ENCODE measurements at regions of chr5 and their contacts with region 1.

Region 1: DNA sequence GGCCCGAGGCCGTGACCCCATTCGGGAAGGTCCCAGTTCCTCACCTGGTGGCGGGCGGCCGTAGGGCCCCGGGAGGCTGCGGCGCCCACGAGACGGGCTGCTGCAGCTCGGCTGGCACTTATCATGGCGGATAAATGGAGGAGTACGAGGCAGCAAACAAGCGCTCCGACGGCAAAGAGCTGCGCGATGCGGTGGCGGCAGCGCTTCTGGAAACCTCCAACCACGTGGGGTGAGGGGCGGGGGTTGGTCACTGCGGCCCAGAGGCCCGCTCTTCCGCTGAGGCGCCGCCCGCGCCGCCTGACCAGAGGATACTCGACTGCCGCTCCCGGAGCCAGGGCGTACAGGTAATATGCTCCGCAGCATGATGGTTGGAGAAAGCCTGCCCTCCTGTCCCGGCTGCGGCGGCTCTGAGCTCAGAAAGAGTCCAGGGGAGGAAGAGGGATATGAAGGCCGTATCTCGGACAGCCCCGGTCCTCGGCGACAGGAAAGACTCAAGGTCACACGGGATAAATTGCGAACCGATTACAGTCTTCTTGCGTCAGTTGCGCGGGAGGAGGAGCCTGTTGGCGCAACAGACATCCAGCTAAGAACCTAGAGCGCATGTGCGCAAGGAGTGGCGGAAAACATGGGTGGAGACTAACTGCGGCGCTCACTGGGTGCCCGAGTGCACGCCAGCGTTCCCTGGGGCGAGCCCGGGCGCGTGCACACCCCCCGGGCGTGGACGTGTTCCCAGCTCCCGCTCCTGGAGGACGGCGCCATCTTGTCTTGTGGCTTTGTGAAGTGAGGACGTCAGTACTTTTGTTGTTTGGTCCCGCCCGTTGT is at the start of gene HSPA9:
- DNase-seq: peak; percentile 98 to 99 (median 98)
- H3K4me3 ChIP-seq: peak within 1 kb of the TSS; percentile 88
- H3K27ac ChIP-seq: peak within 1 kb of the TSS; percentile 97 to 98
- H3K4me1 ChIP-seq: peaks cover 1% of the 10 kb centered on the region
- H3K27me3 ChIP-seq: no peaks in the 10 kb centered on the region
- CTCF ChIP-seq: peak in 2 of 3 donors; percentile 6 to 57
- EP300 ChIP-seq: peak; percentile 26
- POLR2A ChIP-seq: peak; percentile 91
- total RNA-seq, gene HSPA9: 147 to 340 (median 180) TPM

Region 2: DNA sequence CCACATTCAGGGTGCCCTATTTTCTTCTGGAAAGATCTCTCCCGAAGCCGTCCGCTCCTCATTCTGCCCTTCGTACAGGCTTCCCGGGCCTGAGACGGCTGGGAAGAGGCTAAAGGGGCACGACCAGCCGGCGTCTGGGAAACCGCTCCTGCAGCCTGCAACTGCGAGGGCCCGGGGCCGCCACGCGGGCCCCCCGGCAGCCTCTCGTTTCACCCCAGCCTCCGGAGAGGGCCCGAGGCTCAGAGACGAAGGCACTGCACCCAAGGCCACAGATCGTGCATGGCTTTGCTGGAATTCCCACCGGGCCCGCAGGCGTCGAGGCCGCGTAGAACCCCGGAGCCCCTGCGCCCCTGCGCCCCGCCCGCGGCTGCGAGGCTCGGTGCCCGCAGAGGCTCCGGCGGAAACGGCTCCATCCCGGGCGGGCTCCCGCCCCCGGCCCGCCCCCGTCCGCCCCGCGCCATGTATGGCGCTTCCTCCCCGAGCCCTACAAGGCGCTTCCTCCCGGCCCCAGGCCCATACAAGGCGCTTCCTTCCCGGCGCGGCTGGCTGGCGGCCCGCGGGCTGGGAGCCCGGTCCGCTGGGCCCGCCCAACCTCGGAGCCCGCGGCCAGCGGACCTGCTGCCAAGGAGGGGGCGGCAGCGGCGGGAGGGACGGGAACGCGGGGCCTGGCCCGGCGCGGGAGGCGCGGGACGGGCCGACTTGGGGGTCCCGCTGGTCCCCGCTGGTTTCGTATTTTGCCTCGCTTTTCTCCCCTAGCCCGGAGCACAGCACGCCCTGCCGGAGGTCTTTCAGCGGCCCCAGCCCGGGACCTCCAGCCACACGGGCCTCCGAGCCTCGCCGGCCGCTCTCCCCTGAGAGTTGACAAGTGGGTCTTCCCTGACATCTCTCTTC is 83.5 kb before region 1 on chr5:
- intact Hi-C with region 1: no loop called
- DNase-seq: peak; percentile 93 to 96 (median 95)
- H3K4me3 ChIP-seq: peak overlapping the region; percentile 51
- H3K27ac ChIP-seq: peak overlapping the region; percentile 9 to 71
- H3K4me1 ChIP-seq: peaks cover 15% of the 10 kb centered on the region
- H3K27me3 ChIP-seq: no peaks in the 10 kb centered on the region
- CTCF ChIP-seq: no peak
- EP300 ChIP-seq: no peak
- POLR2A ChIP-seq: peak; percentile 69

Region 3: DNA sequence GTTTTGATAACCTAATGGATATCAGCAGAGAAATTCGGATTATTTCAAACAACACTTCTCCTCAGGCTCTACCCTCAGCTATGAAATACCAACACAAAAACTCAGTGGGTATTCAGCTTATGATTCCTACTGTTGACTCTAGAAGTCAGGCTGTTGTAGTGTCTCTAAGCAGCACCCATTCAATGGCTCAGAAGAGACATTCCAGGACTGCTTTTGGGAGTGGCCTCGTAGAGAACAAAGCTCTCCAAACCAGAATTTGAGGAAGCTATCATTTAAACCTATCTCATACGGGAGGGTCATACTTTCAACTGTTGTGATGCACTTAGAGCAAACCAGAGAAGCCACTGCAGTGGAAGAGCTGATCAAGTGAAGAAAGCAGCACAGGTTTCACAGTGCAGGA is 66.4 kb before region 1 on chr5:
- intact Hi-C with region 1: no loop called
- DNase-seq: no peak
- H3K4me3 ChIP-seq: no peak overlapping the region
- H3K27ac ChIP-seq: no peak overlapping the region
- H3K4me1 ChIP-seq: no peaks in the 10 kb centered on the region
- H3K27me3 ChIP-seq: no peaks in the 10 kb centered on the region
- CTCF ChIP-seq: no peak
- EP300 ChIP-seq: no peak
- POLR2A ChIP-seq: no peak

Region 4: DNA sequence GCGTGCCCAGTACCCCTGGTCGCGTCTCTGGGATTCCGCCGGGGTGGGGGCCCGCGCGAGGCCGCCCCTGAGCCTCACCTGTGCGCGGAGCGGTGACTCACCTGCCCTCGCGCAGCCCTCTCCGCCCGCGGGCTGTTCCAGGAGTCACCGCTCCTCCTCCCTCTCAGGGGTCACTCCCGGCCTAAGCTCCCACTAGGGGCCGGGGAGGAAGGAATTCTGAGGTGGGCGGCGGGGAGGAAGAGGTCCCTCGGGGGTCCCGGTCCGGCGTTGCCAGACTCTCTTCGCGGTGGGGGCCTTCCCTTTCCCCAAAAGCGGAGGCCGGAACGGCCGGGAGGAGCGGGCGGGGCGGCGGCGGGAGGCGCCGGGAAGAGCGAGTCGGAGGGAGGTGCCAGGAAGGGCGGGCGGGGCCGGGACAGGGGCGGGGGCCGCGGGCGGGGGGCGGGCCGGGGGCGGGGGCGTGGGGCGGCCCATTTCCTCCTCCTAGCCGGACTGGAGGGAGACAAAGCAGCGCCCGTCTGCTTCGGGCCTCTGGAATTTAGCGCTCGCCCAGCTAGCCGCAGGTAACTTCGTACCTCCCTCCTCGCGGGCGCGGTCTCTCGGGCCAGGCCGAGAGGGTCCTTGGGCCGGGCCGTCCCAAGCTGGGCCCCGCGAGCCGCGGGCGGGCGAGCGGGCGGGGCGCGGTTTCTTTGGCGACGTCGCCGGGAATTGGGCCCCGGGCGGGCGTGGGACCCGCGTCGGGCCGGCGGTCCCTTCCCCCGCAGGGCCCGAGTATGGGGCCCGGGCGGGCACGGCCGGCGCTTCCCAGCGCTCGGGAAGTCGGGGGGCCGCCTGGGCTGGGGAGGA is 177.8 kb after region 1 on chr5 and contains the start of gene CTNNA1:
- intact Hi-C with region 1: loop called in 2 of 4 experiments (anchors 5 to 10 kb)
- DNase-seq: peak; percentile 82 to 88 (median 86)
- H3K4me3 ChIP-seq: peak within 1 kb of the TSS; percentile 94
- H3K27ac ChIP-seq: peak within 1 kb of the TSS; percentile 97
- H3K4me1 ChIP-seq: peaks cover 12% of the 10 kb centered on the region
- H3K27me3 ChIP-seq: no peaks in the 10 kb centered on the region
- CTCF ChIP-seq: peak in 1 of 3 donors; percentile 54
- EP300 ChIP-seq: no peak
- POLR2A ChIP-seq: peak; percentile 64
- total RNA-seq, gene CTNNA1: 125 to 278 (median 230) TPM

Region 5: DNA sequence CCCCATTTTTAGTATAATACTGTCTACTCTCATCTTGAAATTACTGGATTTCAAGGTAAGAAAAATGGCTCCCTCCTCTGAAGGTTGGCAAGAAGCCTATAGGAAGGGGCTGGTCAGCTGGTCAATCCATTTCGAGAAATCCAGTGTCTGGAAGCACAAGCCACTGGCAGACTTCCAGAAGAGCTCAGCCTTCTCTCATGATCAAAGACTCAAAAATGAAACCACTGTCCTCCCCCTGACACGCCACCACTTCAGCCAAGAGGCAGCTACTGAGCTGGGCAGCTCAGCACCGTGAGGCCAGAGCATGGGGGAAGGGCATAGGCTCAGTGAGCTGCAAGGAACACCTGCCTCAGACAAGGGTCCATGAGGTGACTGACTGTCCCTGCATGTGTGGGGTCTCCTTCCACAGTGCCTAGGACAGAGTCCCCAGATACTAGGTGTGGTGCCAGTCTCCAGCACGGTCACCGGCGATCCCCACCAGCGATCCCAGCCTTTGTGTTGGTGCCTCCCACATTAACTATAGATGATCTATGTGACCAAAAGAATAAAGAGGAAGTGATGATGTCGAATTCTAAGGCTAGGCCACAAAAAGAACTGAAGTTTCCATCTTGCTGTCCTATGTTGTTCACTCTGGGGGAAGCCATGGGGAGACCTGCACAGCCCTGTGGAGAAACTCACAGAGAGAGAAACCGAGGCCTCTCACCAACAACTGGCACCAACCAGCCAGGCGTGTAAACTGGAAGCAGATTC is 399.9 kb after region 1 on chr5:
- intact Hi-C with region 1: no loop called
- DNase-seq: peak; percentile 65 to 90 (median 77)
- H3K4me3 ChIP-seq: no peak overlapping the region
- H3K27ac ChIP-seq: peak overlapping the region in 1 of 2 donors; percentile 59
- H3K4me1 ChIP-seq: peaks cover 10% of the 10 kb centered on the region
- H3K27me3 ChIP-seq: no peaks in the 10 kb centered on the region
- CTCF ChIP-seq: no peak
- EP300 ChIP-seq: no peak
- POLR2A ChIP-seq: no peak

Measured in ovary (tissue), 10 donors.